Breast epithelium (tissue), 4 donors: ENCODE measurements at regions of chrX and their contacts with region 1.

Region 1: GRCh38 chrX:137479386-137479785 is 86.5 kb upstream of the ZIC3 start:
- DNase-seq: no peak
- H3K4me3 ChIP-seq: no peak overlapping the region
- H3K27ac ChIP-seq: no peak overlapping the region
- H3K4me1 ChIP-seq: no peaks in the 10 kb centered on the region
- H3K27me3 ChIP-seq: peaks cover 0 to 64% of the 10 kb centered on the region in 2 donors
- CTCF ChIP-seq: no peak
- POLR2A ChIP-seq: no peak

Region 2: GRCh38 chrX:137695417-137695816 is 216.0 kb after region 1 on chrX:
- intact Hi-C with region 1: loop called (anchors 5 kb)
- DNase-seq: no peak
- H3K4me3 ChIP-seq: no peak overlapping the region
- H3K27ac ChIP-seq: no peak overlapping the region
- H3K4me1 ChIP-seq: no peaks in the 10 kb centered on the region
- H3K27me3 ChIP-seq: peaks cover 0 to 11% of the 10 kb centered on the region in 2 donors
- CTCF ChIP-seq: no peak
- POLR2A ChIP-seq: no peak